ENCODE measurements at regions of chr17 and their contacts with region 1.

Region 1: GRCh38 chr17:732067-732901 is at the start of gene TLCD3A:
- DNase-seq: peak; percentile 77
- ATAC-seq: peak; percentile 68
- H3K4me3 Mint-ChIP-seq: peak within 1 kb of the TSS; percentile 87
- H3K27ac Mint-ChIP-seq: peak within 1 kb of the TSS; percentile 70
- H3K4me1 Mint-ChIP-seq: peaks cover 11% of the 10 kb centered on the region
- H3K27me3 Mint-ChIP-seq: peaks cover 21% of the 10 kb centered on the region
- total RNA-seq, gene TLCD3A: 13.8 to 25.9 TPM

Region 2: GRCh38 chr17:640436-640835 is 91.8 kb before region 1 on chr17:
- CTCF ChIA-PET with region 1: no interaction called
- POLR2A ChIA-PET with region 1: no interaction called
- intact Hi-C with region 1: no loop called
- DNase-seq: no peak
- ATAC-seq: no peak
- H3K4me3 Mint-ChIP-seq: no peak overlapping the region
- H3K27ac Mint-ChIP-seq: no peak overlapping the region
- H3K4me1 Mint-ChIP-seq: peaks cover 13% of the 10 kb centered on the region
- H3K27me3 Mint-ChIP-seq: no peaks in the 10 kb centered on the region

Region 3: GRCh38 chr17:716238-716637 is 16.0 kb before region 1 on chr17:
- CTCF ChIA-PET with region 1: interaction called, 3 read pairs
- POLR2A ChIA-PET with region 1: interaction called, 5 read pairs
- intact Hi-C with region 1: loop called (anchors 1 to 2 kb)
- DNase-seq: no peak
- ATAC-seq: no peak
- H3K4me3 Mint-ChIP-seq: no peak overlapping the region
- H3K27ac Mint-ChIP-seq: no peak overlapping the region
- H3K4me1 Mint-ChIP-seq: peaks cover 26% of the 10 kb centered on the region
- H3K27me3 Mint-ChIP-seq: no peaks in the 10 kb centered on the region

Region 4: DNA sequence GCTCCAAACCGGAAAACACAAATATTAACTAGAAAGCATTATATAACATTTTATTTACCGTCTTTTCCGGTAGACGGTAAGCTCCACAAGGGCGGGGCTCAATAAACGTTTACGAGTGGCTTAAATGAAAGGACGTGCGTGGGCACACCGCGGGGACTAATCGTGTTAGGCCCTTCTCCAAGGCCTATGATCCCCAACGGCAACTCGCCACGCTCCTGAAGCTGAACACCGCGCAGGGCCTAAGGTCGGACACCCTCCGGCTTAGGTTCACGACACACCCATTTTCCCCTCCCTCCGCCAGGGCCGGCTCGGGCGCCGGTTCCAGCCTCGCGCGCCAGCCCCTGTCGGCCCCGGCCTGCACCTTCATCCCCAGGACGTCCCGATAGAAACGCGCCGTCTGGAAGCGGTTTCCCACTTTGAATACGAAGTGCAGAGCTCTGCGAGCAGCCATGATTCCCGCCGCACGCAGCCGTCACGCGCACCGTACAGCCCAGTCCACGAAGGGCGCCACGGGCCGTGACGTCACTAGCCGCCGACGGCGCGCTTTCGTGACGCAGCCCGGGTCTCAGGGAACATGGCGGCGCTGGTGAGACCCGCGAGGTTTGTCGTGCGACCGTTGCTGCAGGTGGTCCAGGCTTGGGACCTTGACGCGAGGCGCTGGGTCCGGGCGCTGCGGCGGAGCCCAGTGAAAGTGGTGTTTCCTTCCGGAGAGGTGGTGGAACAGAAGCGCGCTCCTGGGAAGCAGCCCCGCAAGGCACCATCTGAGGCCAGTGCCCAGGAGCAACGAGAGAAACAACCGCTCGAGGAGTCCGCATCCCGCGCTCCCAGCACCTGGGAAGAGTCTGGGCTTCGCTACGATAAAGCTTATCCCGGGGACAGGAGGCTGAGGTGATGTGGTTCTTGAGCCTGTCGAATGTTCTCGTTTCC is 49.8 kb after region 1 on chr17 and contains the starts of genes GLOD4 and MRM3:
- CTCF ChIA-PET with region 1: no interaction called
- POLR2A ChIA-PET with region 1: no interaction called
- intact Hi-C with region 1: loop called in 1 of 2 experiments (anchors 1 kb)
- DNase-seq: peak; percentile 96
- ATAC-seq: peak; percentile 89
- H3K4me3 Mint-ChIP-seq: peak within 1 kb of the TSS; percentile 97
- H3K27ac Mint-ChIP-seq: peak within 1 kb of the TSS; percentile 96
- H3K4me1 Mint-ChIP-seq: peaks cover 35% of the 10 kb centered on the region
- H3K27me3 Mint-ChIP-seq: no peaks in the 10 kb centered on the region
- total RNA-seq, gene GLOD4: 59.5 to 64.0 TPM
- total RNA-seq, gene MRM3: 20.6 to 31.4 TPM

Region 5: GRCh38 chr17:801660-802059 is 69.4 kb after region 1 on chr17:
- CTCF ChIA-PET with region 1: no interaction called
- POLR2A ChIA-PET with region 1: no interaction called
- intact Hi-C with region 1: no loop called
- DNase-seq: no peak
- ATAC-seq: no peak
- H3K4me3 Mint-ChIP-seq: no peak overlapping the region
- H3K27ac Mint-ChIP-seq: no peak overlapping the region
- H3K4me1 Mint-ChIP-seq: no peaks in the 10 kb centered on the region
- H3K27me3 Mint-ChIP-seq: no peaks in the 10 kb centered on the region

Measured in activated CD4-positive, alpha-beta T cell treated with anti-CD3 and anti-CD28 coated beads for 36 hours (primary cell).